H1 (cell line): ENCODE measurements at regions of chr2 and their contacts with region 1.

Region 1: DNA sequence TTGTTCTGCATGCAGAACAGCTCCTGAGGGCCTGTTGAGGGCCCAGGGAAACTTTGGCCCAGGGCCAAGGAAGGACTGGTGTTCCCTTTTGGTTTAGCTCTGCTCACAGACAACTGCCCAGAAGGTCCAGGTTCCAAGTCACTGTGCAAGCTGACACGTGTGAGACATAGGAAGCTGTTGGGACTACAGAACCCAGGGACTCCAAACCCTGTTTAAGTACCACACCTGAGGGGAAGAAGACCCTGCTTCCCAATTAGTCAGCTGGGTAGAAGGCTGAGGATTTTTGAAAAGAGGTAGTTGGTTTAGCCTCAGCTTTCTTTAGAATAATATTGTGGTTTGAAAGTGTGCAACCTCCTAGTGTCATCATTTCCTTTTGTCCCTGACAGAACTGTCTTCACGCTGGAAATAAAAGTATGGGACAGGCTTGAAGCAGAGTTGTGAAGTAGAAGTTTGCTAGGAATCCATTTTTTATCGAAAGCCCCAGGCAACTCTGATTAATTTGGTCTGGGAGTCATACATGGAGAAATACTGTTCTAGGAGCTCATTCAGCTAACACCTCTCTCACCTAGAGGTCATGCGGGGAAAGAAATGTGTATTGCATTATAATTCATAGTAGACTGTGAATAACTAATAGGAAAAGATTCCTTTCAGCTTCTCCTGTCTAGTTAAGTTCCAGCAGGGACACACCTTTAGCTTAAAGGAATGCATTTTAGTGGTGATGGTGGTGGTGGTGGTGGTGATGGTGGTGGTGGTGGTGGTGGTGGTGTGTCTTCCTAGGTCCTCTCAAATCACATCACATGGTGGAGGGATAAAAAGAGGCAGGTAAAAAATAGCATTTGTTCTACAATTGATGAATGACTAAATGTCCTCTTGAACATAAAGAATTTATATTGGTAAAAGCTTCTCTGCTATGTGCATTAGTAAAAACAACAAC is 19.8 kb upstream of the IL1RL1 start:
- DNase-seq: no peak
- H3K4me3 ChIP-seq: no peak overlapping the region
- H3K27ac ChIP-seq: no peak overlapping the region
- H3K4me1 ChIP-seq: no peaks in the 10 kb centered on the region
- H3K27me3 ChIP-seq: no peaks in the 10 kb centered on the region
- CTCF ChIP-seq: no peak
- EP300 ChIP-seq: no peak
- POLR2A ChIP-seq: no peak
- RAD21 ChIP-seq: no peak

Region 2: DNA sequence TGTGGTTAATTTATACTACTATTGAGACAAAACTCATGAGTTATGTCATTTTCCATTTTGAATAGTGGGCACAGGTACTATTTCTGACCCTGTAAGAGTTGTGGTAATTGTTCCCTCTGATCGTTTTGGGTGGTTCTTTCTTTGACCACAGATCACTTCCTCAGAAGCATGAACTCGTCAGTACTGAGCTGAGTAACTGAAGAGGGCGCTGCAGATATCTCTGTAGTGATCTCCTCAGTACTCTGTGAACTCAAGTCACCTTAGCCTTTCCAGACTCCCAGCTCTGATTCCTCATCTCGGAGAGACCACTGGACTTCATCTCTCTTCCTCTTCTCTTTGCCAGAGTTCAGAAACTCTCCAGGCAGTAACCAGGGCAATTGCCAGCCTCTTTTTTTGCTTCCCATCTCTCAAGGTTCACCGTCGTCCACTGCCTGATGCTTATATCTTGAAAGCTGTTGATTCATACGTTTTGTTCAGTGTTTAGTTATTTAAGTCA is 10.3 kb after region 1 on chr2:
- CTCF ChIA-PET with region 1: interaction called, 28 read pairs
- POLR2A ChIA-PET with region 1: interaction called, 4 read pairs
- DNase-seq: peak; percentile 7 to 46
- H3K4me3 ChIP-seq: no peak overlapping the region
- H3K27ac ChIP-seq: no peak overlapping the region
- H3K4me1 ChIP-seq: no peaks in the 10 kb centered on the region
- H3K27me3 ChIP-seq: no peaks in the 10 kb centered on the region
- CTCF ChIP-seq: peak in 2 of 3 experiments; percentile 63 to 77; a peak in 3 of 4 replicates
- EP300 ChIP-seq: no peak
- POLR2A ChIP-seq: no peak
- RAD21 ChIP-seq: peak; percentile 55 to 59

Region 3: GRCh38 chr2:102313025-102313424 is 21.4 kb after region 1 on chr2:
- CTCF ChIA-PET with region 1: no interaction called
- POLR2A ChIA-PET with region 1: no interaction called
- DNase-seq: no peak
- H3K4me3 ChIP-seq: no peak overlapping the region
- H3K27ac ChIP-seq: no peak overlapping the region
- H3K4me1 ChIP-seq: no peaks in the 10 kb centered on the region
- H3K27me3 ChIP-seq: no peaks in the 10 kb centered on the region
- CTCF ChIP-seq: no peak
- EP300 ChIP-seq: no peak
- POLR2A ChIP-seq: no peak
- RAD21 ChIP-seq: no peak